ENCODE measurements at regions of chr12 and their contacts with region 1.

Region 1: GRCh38 chr12:130747867-130748740 is 32.0 kb upstream of the RIMBP2 start:
- DNase-seq: peak; percentile 89
- ATAC-seq: peak; percentile 93
- H3K4me3 Mint-ChIP-seq: no peak overlapping the region
- H3K27ac Mint-ChIP-seq: no peak overlapping the region
- H3K4me1 Mint-ChIP-seq: peaks cover 7% of the 10 kb centered on the region
- H3K27me3 Mint-ChIP-seq: peaks cover 7% of the 10 kb centered on the region

Region 2: DNA sequence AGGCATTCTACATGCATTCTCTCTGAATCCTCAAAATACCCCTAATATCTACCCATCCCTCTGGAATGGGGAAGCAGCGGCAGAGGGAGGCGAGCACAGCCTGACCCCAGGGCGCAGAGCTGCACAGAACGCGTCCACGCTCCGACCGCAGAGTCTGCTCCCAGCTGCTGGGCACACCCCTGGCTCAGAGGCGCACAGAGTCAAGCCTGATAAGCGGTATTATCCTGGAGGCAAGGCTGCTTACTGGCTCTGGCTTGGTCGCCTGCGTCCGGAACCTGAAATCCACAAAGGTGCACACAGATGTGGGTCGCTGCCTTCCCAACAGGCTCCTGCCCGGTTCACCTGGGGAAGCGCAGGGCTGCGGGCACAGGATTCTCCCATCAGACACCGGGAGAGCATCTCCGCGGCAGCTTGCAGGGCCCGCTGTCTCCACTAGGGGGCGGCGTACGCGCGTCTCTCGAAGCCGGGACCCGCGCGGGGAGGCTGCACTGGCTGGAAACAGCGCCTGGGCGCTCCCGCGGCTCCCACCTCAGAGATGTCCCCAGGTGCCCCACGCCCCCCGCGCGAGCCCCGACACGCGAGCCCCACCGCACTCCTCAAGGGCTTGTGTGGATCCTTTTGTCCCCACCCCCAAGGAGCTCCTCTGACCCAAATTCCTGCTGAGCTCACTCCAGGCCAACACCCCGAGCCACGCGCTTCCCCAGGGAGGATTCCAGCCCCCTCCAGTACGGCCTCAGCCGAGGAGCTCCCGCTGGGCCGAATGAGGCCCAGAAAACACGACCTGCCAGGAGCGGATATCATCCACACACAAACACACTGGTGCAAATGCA is 705.9 kb before region 1 on chr12:
- CTCF ChIA-PET with region 1: interaction called, 3 read pairs
- POLR2A ChIA-PET with region 1: no interaction called
- intact Hi-C with region 1: loop called (anchors 1 to 10 kb)
- DNase-seq: peak; percentile 83
- ATAC-seq: peak; percentile 69
- H3K4me3 Mint-ChIP-seq: no peak overlapping the region
- H3K27ac Mint-ChIP-seq: no peak overlapping the region
- H3K4me1 Mint-ChIP-seq: no peaks in the 10 kb centered on the region
- H3K27me3 Mint-ChIP-seq: peaks cover 43% of the 10 kb centered on the region

Region 3: DNA sequence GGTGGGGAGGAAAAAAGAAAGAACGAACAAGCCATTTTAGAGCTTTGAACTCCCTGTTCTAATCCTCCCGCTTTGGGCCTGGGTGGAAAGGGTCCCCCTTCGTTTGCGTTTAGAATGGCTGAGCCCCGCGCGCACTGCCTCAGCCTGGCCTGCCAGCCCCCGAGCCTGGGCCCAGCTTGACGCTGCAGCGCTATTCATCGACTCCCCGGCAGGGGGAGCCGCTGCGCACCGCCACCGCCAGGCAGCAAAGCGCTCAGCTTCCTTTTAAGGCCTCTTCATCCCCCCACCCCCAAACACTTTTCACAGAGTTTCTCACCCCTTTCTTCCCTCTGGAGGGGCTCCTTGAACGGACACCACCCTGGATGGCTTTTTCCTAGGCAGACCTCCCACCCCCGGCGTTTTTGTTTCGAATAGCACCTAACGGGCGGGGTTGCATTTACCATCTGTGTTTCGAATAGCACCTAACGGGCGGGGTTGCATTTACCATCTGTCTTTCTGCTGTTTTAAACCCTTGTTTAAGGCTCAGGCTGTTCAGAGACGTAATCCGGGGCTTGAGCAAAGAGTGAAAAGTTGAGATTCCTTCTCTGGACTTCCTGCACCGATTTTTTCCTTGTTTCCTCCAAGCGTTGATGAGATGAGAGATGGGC is 466.8 kb before region 1 on chr12:
- CTCF ChIA-PET with region 1: interaction called, 6 read pairs
- POLR2A ChIA-PET with region 1: no interaction called
- intact Hi-C with region 1: loop called (anchors 1 to 5 kb)
- DNase-seq: peak; percentile 77
- ATAC-seq: peak; percentile 77
- H3K4me3 Mint-ChIP-seq: peak overlapping the region; percentile 54
- H3K27ac Mint-ChIP-seq: no peak overlapping the region
- H3K4me1 Mint-ChIP-seq: peaks cover 5% of the 10 kb centered on the region
- H3K27me3 Mint-ChIP-seq: peaks cover 3% of the 10 kb centered on the region

Region 4: GRCh38 chr12:130335517-130336392 is 412.3 kb before region 1 on chr12:
- CTCF ChIA-PET with region 1: no interaction called
- POLR2A ChIA-PET with region 1: no interaction called
- intact Hi-C with region 1: loop called in 1 of 2 experiments (anchors 5 kb)
- DNase-seq: peak; percentile 47
- ATAC-seq: peak; percentile 30
- H3K4me3 Mint-ChIP-seq: no peak overlapping the region
- H3K27ac Mint-ChIP-seq: no peak overlapping the region
- H3K4me1 Mint-ChIP-seq: no peaks in the 10 kb centered on the region
- H3K27me3 Mint-ChIP-seq: peaks cover 23% of the 10 kb centered on the region

Region 5: GRCh38 chr12:130401703-130402102 is 346.4 kb before region 1 on chr12:
- CTCF ChIA-PET with region 1: no interaction called
- POLR2A ChIA-PET with region 1: no interaction called
- intact Hi-C with region 1: loop called (anchors 5 kb)
- DNase-seq: no peak
- ATAC-seq: no peak
- H3K4me3 Mint-ChIP-seq: no peak overlapping the region
- H3K27ac Mint-ChIP-seq: no peak overlapping the region
- H3K4me1 Mint-ChIP-seq: no peaks in the 10 kb centered on the region
- H3K27me3 Mint-ChIP-seq: peaks cover 4% of the 10 kb centered on the region

Region 6: GRCh38 chr12:130460611-130461478 is 287.3 kb before region 1 on chr12:
- CTCF ChIA-PET with region 1: no interaction called
- POLR2A ChIA-PET with region 1: no interaction called
- intact Hi-C with region 1: loop called in 1 of 2 experiments (anchors 1 kb)
- DNase-seq: no peak
- ATAC-seq: no peak
- H3K4me3 Mint-ChIP-seq: no peak overlapping the region
- H3K27ac Mint-ChIP-seq: no peak overlapping the region
- H3K4me1 Mint-ChIP-seq: no peaks in the 10 kb centered on the region
- H3K27me3 Mint-ChIP-seq: no peaks in the 10 kb centered on the region

Measured in activated CD4-positive, alpha-beta T cell treated with anti-CD3 and anti-CD28 coated beads for 36 hours (primary cell).